ENCODE measurements at regions of chr6 and their contacts with region 1.

Region 1: DNA sequence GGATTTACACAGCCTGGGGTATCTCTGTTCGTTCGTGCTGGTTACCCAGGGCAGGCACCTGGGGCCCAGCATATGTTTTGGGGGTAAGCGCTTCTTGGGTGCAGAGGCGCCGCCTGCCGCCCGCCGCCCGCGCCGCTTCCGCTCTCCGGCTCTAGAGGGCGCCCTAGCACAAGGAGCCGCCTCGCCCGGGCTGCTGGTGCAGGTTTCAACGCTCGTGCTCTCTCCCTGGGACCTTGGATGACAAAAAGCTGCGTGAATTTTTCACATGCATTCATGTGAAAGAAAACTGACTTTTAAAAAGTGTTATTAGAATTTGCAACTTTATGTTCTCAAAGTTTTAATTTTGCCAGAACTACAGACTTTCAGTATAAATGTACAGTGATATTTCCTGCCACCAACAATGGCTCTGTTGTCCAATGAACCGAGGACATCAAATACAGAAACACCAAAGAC is 32.5 kb downstream of the PRR18 start:
- DNase-seq: peak; percentile 79 to 88 (median 84)
- ATAC-seq: peak; percentile 98
- H3K4me3 ChIP-seq: no peak overlapping the region
- H3K27ac ChIP-seq: no peak overlapping the region
- H3K4me1 ChIP-seq: peaks cover 0 to 6% of the 10 kb centered on the region in 2 experiments; a peak in 1 of 5 replicates
- H3K27me3 ChIP-seq: peaks cover 12 to 53% of the 10 kb centered on the region in 2 experiments; a peak in 3 of 5 replicates
- CTCF ChIP-seq: peak; percentile 98 to 100 (median 100)
- EP300 ChIP-seq: no peak
- POLR2A ChIP-seq: no peak
- RAD21 ChIP-seq: peak; percentile 99

Region 2: GRCh38 chr6:165884813-165885765 is 390.7 kb before region 1 on chr6:
- CTCF ChIA-PET with region 1: no interaction called
- POLR2A ChIA-PET with region 1: no interaction called
- in situ Hi-C with region 1: no loop called
- intact Hi-C with region 1: loop called (anchors 5 kb)
- DNase-seq: peak; percentile 78 to 82 (median 80)
- ATAC-seq: peak; percentile 100
- H3K4me3 ChIP-seq: no peak overlapping the region
- H3K27ac ChIP-seq: no peak overlapping the region
- H3K4me1 ChIP-seq: no peaks in the 10 kb centered on the region
- H3K27me3 ChIP-seq: no peaks in the 10 kb centered on the region; a peak in 1 of 5 replicates
- CTCF ChIP-seq: peak; percentile 89 to 95 (median 92)
- EP300 ChIP-seq: no peak
- POLR2A ChIP-seq: no peak
- RAD21 ChIP-seq: peak; percentile 74 to 87

Region 3: GRCh38 chr6:166237617-166238016 is 38.1 kb before region 1 on chr6:
- CTCF ChIA-PET with region 1: no interaction called
- POLR2A ChIA-PET with region 1: no interaction called
- in situ Hi-C with region 1: no loop called
- intact Hi-C with region 1: no loop called
- DNase-seq: no peak
- ATAC-seq: no peak
- H3K4me3 ChIP-seq: no peak overlapping the region
- H3K27ac ChIP-seq: no peak overlapping the region
- H3K4me1 ChIP-seq: peaks cover 0 to 4% of the 10 kb centered on the region in 2 experiments; a peak in 1 of 5 replicates
- H3K27me3 ChIP-seq: peaks cover 37 to 55% of the 10 kb centered on the region in 2 experiments
- CTCF ChIP-seq: no peak
- EP300 ChIP-seq: no peak
- POLR2A ChIP-seq: no peak
- RAD21 ChIP-seq: no peak

Region 4: GRCh38 chr6:166333172-166333995 is 57.6 kb after region 1 on chr6:
- CTCF ChIA-PET with region 1: no interaction called
- POLR2A ChIA-PET with region 1: no interaction called
- in situ Hi-C with region 1: no loop called
- intact Hi-C with region 1: loop called (anchors 1 kb)
- DNase-seq: no peak
- ATAC-seq: no peak
- H3K4me3 ChIP-seq: no peak overlapping the region
- H3K27ac ChIP-seq: no peak overlapping the region
- H3K4me1 ChIP-seq: peaks cover 5 to 14% of the 10 kb centered on the region in 2 experiments; a peak in 4 of 5 replicates
- H3K27me3 ChIP-seq: no peaks in the 10 kb centered on the region
- CTCF ChIP-seq: no peak
- EP300 ChIP-seq: no peak
- POLR2A ChIP-seq: peak; percentile 54
- RAD21 ChIP-seq: no peak

Region 5: DNA sequence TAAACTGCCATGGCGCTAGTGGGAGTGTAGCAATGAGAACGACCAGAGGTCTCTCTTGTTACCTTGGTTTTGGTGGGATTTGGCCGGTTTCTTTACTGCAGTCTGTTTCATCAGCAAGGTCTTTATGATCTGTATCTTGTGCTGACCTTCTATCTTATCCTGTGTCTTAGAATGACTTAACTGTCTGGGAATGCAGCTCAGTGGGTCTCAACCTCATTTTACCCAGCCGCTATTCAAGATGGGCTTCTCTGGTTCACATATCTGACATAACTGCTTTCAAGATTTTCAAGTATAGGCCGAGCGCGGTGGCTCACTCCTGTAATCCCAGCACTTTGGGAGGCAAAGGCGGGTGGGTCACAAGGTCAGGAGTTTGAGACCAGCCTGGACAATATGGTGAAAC is 68.5 kb after region 1 on chr6:
- CTCF ChIA-PET with region 1: no interaction called
- POLR2A ChIA-PET with region 1: no interaction called
- in situ Hi-C with region 1: no loop called
- intact Hi-C with region 1: no loop called
- DNase-seq: no peak
- ATAC-seq: no peak
- H3K4me3 ChIP-seq: no peak overlapping the region
- H3K27ac ChIP-seq: no peak overlapping the region
- H3K4me1 ChIP-seq: peaks cover 10 to 18% of the 10 kb centered on the region in 2 experiments; a peak in 4 of 5 replicates
- H3K27me3 ChIP-seq: no peaks in the 10 kb centered on the region
- CTCF ChIP-seq: no peak
- EP300 ChIP-seq: no peak; the same call in 1 of the 2 replicates
- POLR2A ChIP-seq: no peak
- RAD21 ChIP-seq: no peak

Region 6: DNA sequence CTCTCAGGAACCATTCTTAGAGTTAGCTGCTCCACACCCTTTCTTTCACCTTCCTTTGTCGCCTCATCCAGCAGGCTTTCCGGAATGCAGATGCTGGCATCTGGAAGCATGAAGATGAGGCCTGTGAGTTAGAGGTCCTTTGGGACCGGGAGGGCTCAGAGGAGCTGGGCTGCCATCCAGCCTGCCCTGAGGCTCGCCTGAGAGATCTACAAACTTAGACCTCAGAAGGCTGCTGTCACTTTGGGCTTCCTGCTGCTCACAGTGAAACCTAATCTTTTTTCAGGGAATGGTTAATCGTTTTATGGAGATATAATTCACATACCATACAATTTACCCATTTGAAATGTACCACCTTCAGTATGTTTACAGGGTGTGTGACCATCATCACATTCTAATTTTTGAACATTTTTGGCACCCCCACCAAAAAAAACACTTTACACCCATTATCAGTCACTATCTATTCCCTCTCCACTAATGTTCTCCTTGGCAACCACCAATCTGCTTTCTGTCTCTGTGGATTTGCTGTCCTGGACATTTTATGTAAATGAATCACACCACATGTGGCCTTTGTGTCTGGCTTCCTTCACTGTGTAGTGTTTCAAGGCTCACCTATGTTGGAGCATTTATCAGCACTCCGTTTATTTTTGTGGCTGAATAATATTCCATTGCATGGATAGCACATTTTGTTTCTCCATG is 127.0 kb after region 1 on chr6:
- CTCF ChIA-PET with region 1: interaction called, 37 read pairs
- POLR2A ChIA-PET with region 1: interaction called, 3 read pairs
- in situ Hi-C with region 1: no loop called
- intact Hi-C with region 1: loop called (anchors 1 kb)
- DNase-seq: no peak
- ATAC-seq: no peak
- H3K4me3 ChIP-seq: no peak overlapping the region
- H3K27ac ChIP-seq: no peak overlapping the region
- H3K4me1 ChIP-seq: peaks cover 0 to 3% of the 10 kb centered on the region in 2 experiments; a peak in 1 of 5 replicates
- H3K27me3 ChIP-seq: peaks cover 38 to 61% of the 10 kb centered on the region in 2 experiments
- CTCF ChIP-seq: no peak
- EP300 ChIP-seq: no peak
- POLR2A ChIP-seq: no peak
- RAD21 ChIP-seq: no peak

Region 7: GRCh38 chr6:166775180-166776081 is 499.7 kb after region 1 on chr6:
- CTCF ChIA-PET with region 1: no interaction called
- POLR2A ChIA-PET with region 1: no interaction called
- in situ Hi-C with region 1: no loop called
- intact Hi-C with region 1: loop called (anchors 10 kb)
- DNase-seq: peak; percentile 79 to 87 (median 81)
- ATAC-seq: peak; percentile 93
- H3K4me3 ChIP-seq: no peak overlapping the region
- H3K27ac ChIP-seq: no peak overlapping the region
- H3K4me1 ChIP-seq: peaks cover 0 to 9% of the 10 kb centered on the region in 2 experiments; a peak in 2 of 5 replicates
- H3K27me3 ChIP-seq: peaks cover 33 to 80% of the 10 kb centered on the region in 2 experiments
- CTCF ChIP-seq: peak; percentile 82 to 96 (median 91)
- EP300 ChIP-seq: no peak
- POLR2A ChIP-seq: no peak
- RAD21 ChIP-seq: peak; percentile 91

Measured in K562 (cell line).